ENCODE measurements at regions of chr12 and their contacts with region 1.

Region 1: DNA sequence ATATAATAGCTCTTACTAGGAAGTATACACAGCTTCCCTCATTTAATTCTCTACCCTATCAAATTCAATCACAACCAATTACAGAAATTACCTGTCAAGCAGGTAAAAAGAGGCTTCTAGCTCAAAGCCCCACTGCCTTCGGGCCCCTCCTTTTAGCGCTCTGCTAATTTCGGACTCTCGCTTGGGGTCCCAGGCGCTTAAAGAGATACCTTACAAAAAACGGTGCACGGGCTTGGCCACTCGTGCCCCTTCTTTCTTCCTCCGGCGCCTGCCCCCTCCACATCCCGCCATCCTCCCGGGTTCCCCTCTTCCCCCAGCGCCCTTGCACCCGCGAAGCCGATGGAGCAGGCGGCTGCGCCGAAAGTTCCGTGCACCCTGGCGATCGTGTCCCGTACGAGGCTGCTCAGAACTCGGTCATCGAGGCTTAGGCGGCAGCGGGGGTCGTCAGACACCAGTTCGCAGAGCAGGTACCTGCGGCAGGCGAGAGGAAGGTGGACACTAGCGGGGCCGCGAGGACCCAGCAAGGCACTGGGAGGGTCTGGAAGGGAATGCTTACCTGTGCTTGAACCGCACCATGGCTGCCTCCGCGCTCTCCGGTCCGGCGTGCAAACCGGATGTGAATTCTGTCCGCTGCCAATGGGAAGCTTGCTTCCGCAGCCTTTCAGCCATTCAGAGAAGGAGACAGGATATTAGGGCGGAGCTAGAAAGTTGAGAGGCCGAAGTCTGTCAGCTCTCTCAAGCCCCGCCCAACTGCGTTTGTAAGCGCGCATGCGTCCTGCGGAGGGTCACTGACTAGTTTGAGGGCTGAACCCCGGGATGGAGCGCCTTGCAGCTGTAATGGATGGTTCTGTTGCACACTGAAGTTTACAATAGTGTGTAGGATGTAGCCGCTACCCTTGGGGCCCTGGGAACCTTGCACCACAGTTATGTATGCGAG is at the start of gene POP5:
- DNase-seq: peak; percentile 96
- ATAC-seq: peak; percentile 95
- H3K4me3 ChIP-seq: peak within 1 kb of the TSS; percentile 67
- H3K27ac ChIP-seq: peak within 1 kb of the TSS; percentile 62
- H3K4me1 ChIP-seq: no peaks in the 10 kb centered on the region
- H3K27me3 ChIP-seq: peaks cover 10% of the 10 kb centered on the region; the same call in 1 of the 2 replicates
- CTCF ChIP-seq: no peak
- POLR2A ChIP-seq: no peak
- RAD21 ChIP-seq: no peak
- total RNA-seq, gene POP5: 66.1 and 69.5 TPM in 2 replicates

Region 2: DNA sequence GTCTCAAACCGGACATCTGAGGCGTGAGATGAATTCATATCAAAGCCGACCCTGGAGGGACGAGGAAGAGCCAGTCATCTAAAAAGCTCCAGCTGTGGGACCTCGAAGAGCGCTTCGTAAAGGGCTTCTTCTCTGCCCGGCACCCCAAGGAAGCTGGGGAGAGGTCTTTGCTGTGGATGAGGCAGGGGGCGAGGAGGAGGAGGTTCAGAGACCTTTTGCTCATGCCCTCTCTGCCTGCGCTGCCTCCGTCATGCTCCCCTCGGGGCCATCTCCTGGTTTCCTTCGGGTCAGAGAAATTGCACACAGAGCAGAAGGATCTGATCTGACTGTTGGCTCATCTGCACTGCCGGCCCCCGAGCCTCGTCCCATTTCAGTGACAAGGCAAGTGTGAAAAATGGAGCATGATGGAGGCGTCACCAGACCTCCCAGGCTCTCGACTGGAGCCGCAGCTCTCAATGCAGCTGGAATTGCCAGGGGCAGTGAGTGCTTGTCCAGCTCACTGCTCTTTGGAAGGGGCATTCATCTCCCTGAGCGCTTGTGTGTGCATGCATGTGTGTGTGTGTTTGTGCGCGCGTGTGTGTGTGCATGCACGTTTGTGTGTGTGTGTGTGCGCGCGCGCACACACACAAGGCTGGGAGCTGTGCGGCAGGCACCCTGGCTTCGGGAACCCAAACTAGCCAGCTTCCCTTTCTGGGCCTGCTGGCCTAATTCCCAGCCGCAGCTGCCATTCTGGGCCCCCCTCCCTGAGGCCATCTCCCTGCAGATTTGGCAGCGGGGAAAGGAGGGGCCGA is 68.6 kb after region 1 on chr12:
- CTCF ChIA-PET with region 1: interaction called, 11 read pairs
- POLR2A ChIA-PET with region 1: interaction called, 3 read pairs
- dilution Hi-C with region 1: no loop called
- in situ Hi-C with region 1: no loop called
- intact Hi-C with region 1: loop called (anchors 1 kb)
- DNase-seq: peak; percentile 5
- ATAC-seq: no peak
- H3K4me3 ChIP-seq: peak overlapping the region; percentile 14; the same call in 1 of the 2 replicates
- H3K27ac ChIP-seq: no peak overlapping the region
- H3K4me1 ChIP-seq: peaks cover 3% of the 10 kb centered on the region; the same call in 1 of the 2 replicates
- H3K27me3 ChIP-seq: peaks cover 54% of the 10 kb centered on the region
- CTCF ChIP-seq: no peak
- POLR2A ChIP-seq: no peak
- RAD21 ChIP-seq: no peak

Region 3: GRCh38 chr12:120971299-120972179 is 390.5 kb after region 1 on chr12:
- CTCF ChIA-PET with region 1: interaction called, 7 read pairs
- POLR2A ChIA-PET with region 1: no interaction called
- dilution Hi-C with region 1: no loop called
- in situ Hi-C with region 1: loop called (anchors 5 kb)
- intact Hi-C with region 1: loop called (anchors 1 kb)
- DNase-seq: peak; percentile 63
- ATAC-seq: peak; percentile 92
- H3K4me3 ChIP-seq: no peak overlapping the region
- H3K27ac ChIP-seq: no peak overlapping the region
- H3K4me1 ChIP-seq: no peaks in the 10 kb centered on the region
- H3K27me3 ChIP-seq: peaks cover 14% of the 10 kb centered on the region; the same call in 1 of the 2 replicates
- CTCF ChIP-seq: peak; percentile 84
- POLR2A ChIP-seq: no peak
- RAD21 ChIP-seq: peak; percentile 79

Region 4: DNA sequence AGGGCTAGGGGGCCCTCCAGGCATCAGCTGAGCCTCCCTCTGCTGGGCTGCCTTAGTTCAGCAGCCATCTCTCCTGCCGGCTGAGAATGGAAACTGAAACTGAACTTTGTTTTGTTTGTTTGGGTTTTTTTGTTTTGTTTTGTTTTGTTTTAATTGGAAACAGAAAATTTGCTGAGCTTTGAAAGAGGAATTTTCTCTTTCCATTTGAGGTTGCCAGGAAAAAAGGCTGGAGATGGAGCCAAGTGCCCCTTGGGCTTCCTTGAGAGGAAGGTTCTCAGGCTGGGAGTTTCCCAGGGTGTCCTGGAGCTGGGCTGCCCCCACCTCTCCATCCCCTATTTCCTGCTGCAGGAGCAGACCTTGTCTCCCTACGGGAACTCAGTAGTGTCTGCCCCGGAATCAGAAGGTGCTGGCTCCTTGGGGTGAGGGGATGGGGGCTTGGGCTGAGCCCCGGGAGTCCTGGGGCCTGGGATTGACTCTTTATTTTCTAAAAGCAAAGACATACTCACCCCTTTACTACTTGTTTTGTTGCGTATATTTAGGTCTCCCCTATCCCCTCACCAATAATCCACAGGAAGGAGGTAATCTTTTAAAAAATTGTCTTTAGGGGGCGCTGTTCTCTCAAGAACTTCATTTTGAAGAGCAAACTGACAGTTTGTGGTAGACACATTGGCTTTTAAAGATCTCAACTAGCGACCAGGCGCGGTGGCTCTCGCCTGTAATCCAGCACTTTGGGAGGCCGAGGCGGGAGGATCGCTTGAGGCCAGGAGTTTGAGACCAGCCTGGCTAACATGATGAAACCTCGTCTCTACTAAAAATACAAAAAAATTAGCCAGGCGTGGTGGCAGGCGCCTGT is 479.3 kb after region 1 on chr12:
- CTCF ChIA-PET with region 1: no interaction called
- POLR2A ChIA-PET with region 1: no interaction called
- dilution Hi-C with region 1: no loop called
- in situ Hi-C with region 1: no loop called
- intact Hi-C with region 1: loop called (anchors 1 kb)
- DNase-seq: peak; percentile 33
- ATAC-seq: peak; percentile 95
- H3K4me3 ChIP-seq: peak overlapping the region; percentile 14; the same call in 1 of the 2 replicates
- H3K27ac ChIP-seq: no peak overlapping the region
- H3K4me1 ChIP-seq: no peaks in the 10 kb centered on the region
- H3K27me3 ChIP-seq: peaks cover 6% of the 10 kb centered on the region
- CTCF ChIP-seq: peak; percentile 45
- POLR2A ChIP-seq: no peak
- RAD21 ChIP-seq: peak; percentile 39

Region 5: GRCh38 chr12:121110211-121110940 is 529.3 kb after region 1 on chr12:
- CTCF ChIA-PET with region 1: no interaction called
- POLR2A ChIA-PET with region 1: no interaction called
- dilution Hi-C with region 1: no loop called
- in situ Hi-C with region 1: no loop called
- intact Hi-C with region 1: loop called (anchors 1 kb)
- DNase-seq: peak; percentile 61
- ATAC-seq: peak; percentile 92
- H3K4me3 ChIP-seq: no peak overlapping the region
- H3K27ac ChIP-seq: no peak overlapping the region
- H3K4me1 ChIP-seq: no peaks in the 10 kb centered on the region
- H3K27me3 ChIP-seq: peaks cover 2% of the 10 kb centered on the region
- CTCF ChIP-seq: peak; percentile 88
- POLR2A ChIP-seq: no peak
- RAD21 ChIP-seq: peak; percentile 88